PC-3 (cell line): ENCODE measurements at regions of chr11 and their contacts with region 1.

Region 1: GRCh38 chr11:108895579-108896480 is 231.0 kb downstream of the DDX10 start:
- DNase-seq: peak; percentile 95
- ATAC-seq: peak; percentile 92
- H3K4me3 ChIP-seq: peak overlapping the region; percentile 31; the same call in 1 of the 2 replicates
- H3K27ac ChIP-seq: peak overlapping the region; percentile 67
- H3K4me1 ChIP-seq: peaks cover 34% of the 10 kb centered on the region
- H3K27me3 ChIP-seq: no peaks in the 10 kb centered on the region
- CTCF ChIP-seq: no peak

Region 2: DNA sequence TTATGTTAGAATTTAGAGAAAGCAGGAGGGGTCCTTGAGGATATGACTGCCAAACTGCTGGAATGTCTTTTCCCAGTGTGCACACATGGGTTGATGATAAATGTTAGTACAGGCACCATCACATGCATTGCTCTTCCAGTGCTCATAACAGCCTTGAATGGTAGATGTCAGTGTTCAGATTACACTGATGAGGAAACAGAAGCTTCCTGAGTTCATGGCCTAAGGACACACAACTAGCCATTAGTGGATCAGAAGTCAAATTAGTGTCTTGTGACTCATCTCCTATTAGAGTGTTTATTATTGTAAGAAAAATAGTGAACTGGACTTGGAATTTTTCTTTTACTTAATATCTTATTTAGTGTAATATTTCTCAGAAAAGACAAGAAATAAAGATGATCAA is 10.5 kb after region 1 on chr11:
- CTCF ChIA-PET with region 1: no interaction called
- POLR2A ChIA-PET with region 1: no interaction called
- intact Hi-C with region 1: loop called (anchors 1 kb)
- DNase-seq: peak; percentile 87
- ATAC-seq: peak; percentile 98
- H3K4me3 ChIP-seq: no peak overlapping the region
- H3K27ac ChIP-seq: peak overlapping the region; percentile 76
- H3K4me1 ChIP-seq: peaks cover 23% of the 10 kb centered on the region
- H3K27me3 ChIP-seq: no peaks in the 10 kb centered on the region
- CTCF ChIP-seq: no peak

Region 3: GRCh38 chr11:108929241-108929640 is 33.4 kb after region 1 on chr11:
- CTCF ChIA-PET with region 1: no interaction called
- POLR2A ChIA-PET with region 1: interaction called, 6 read pairs
- intact Hi-C with region 1: loop called (anchors 1 kb)
- DNase-seq: peak; percentile 97
- ATAC-seq: peak; percentile 76
- H3K4me3 ChIP-seq: no peak overlapping the region
- H3K27ac ChIP-seq: peak overlapping the region; percentile 93
- H3K4me1 ChIP-seq: peaks cover 51% of the 10 kb centered on the region
- H3K27me3 ChIP-seq: no peaks in the 10 kb centered on the region
- CTCF ChIP-seq: no peak

Region 4: DNA sequence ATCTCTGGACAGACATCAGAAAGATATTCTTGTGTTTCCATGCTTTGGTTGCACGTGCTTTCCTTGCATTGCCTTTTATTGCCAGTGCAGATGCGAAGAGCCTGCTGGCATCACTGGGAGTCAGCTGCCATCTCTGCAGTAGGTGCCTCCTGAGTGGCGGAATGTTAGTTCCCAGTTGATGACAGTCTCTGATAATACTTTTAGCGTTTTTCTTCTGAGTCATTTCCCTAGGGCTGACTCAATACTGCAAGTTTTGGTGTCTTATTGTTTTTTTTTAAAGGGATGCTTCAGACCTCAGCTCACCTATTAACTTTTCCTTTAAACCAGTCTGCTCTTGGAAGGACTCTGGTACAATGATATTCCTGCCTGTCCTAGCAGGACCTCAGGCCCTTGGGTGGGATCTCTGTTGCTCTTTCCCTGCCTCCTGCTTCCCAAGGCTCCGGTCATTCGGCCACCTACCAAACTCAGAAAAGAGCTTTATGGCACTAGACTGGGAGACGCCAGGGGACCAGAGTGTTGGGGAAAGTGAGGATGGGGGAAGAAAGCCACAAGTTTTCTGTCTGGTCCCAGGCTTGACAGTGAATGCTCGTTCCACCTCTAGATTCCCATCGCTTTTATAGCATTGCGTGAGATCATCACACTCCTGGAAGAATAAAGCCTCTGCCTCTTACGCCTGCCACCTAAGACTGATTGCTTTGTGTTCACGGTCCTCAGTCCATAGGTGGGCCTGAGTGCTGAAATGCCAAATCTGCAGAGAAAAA is 77.8 kb after region 1 on chr11:
- CTCF ChIA-PET with region 1: no interaction called
- POLR2A ChIA-PET with region 1: no interaction called
- intact Hi-C with region 1: loop called (anchors 10 kb)
- DNase-seq: peak; percentile 96
- ATAC-seq: peak; percentile 91
- H3K4me3 ChIP-seq: no peak overlapping the region
- H3K27ac ChIP-seq: peak overlapping the region; percentile 61
- H3K4me1 ChIP-seq: peaks cover 22% of the 10 kb centered on the region
- H3K27me3 ChIP-seq: no peaks in the 10 kb centered on the region
- CTCF ChIP-seq: no peak